CD8-positive, alpha-beta T cell (primary cell): ENCODE measurements at regions of chr16 and their contacts with region 1.

Region 1: DNA sequence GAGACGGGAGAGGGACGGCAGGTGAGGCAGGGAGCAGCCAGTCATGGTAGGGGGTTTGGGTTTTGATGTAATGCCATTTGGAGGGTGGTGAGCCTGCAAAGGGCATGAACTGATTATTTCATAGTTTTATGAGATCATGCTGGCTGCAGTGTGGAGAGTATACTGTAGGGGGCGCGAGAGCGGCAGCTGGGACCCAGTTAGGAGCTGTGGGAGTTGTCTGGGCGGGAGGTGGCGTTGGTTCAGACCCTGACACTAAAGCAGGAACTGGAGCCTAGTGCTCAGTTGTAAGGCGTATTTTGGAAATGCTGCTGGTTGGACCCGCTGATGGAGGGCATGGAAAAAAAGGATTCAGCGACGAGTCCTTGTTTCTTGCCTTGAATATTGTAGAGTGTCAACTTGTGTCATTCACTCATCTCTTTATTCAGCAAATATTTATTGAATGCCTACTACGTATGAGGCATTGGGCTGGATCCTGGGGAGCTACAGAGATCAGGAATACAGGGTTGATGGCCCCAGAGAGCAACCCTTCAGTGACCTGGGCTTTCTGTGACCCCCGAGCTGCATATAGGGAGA is 23.7 kb upstream of the KDM8 start:
- DNase-seq: peak; percentile 78 to 94 (median 88)
- ATAC-seq: peak; percentile 100
- H3K4me3 ChIP-seq: no peak overlapping the region
- H3K4me3 Mint-ChIP-seq: peak overlapping the region; percentile 9
- H3K27ac ChIP-seq: no peak overlapping the region
- H3K27ac Mint-ChIP-seq: peak overlapping the region; percentile 28
- H3K4me1 ChIP-seq: peaks cover 22% of the 10 kb centered on the region
- H3K4me1 Mint-ChIP-seq: peaks cover 24% of the 10 kb centered on the region
- H3K27me3 ChIP-seq: no peaks in the 10 kb centered on the region
- H3K27me3 Mint-ChIP-seq: no peaks in the 10 kb centered on the region
- CTCF ChIP-seq: peak; percentile 92

Region 2: GRCh38 chr16:27025581-27025980 is 154.0 kb before region 1 on chr16:
- CTCF ChIA-PET with region 1: no interaction called
- POLR2A ChIA-PET with region 1: no interaction called
- intact Hi-C with region 1: no loop called
- DNase-seq: no peak
- ATAC-seq: no peak
- H3K4me3 ChIP-seq: no peak overlapping the region
- H3K4me3 Mint-ChIP-seq: no peak overlapping the region
- H3K27ac ChIP-seq: no peak overlapping the region
- H3K27ac Mint-ChIP-seq: no peak overlapping the region
- H3K4me1 ChIP-seq: no peaks in the 10 kb centered on the region
- H3K4me1 Mint-ChIP-seq: no peaks in the 10 kb centered on the region
- H3K27me3 ChIP-seq: no peaks in the 10 kb centered on the region
- H3K27me3 Mint-ChIP-seq: peaks cover 15% of the 10 kb centered on the region
- CTCF ChIP-seq: no peak

Region 3: GRCh38 chr16:27195941-27196595 is 16.5 kb after region 1 on chr16:
- CTCF ChIA-PET with region 1: interaction called, 59 read pairs
- POLR2A ChIA-PET with region 1: interaction called, 8 read pairs
- intact Hi-C with region 1: loop called (anchors 1 kb)
- DNase-seq: peak in 8 of 9 experiments; percentile 29 to 87 (median 65)
- ATAC-seq: peak; percentile 89
- H3K4me3 ChIP-seq: peak overlapping the region in 1 of 2 experiments; percentile 18
- H3K4me3 Mint-ChIP-seq: peak overlapping the region; percentile 58
- H3K27ac ChIP-seq: peak overlapping the region; percentile 20 to 53
- H3K27ac Mint-ChIP-seq: peak overlapping the region; percentile 98
- H3K4me1 ChIP-seq: peaks cover 68% of the 10 kb centered on the region
- H3K4me1 Mint-ChIP-seq: peaks cover 70% of the 10 kb centered on the region
- H3K27me3 ChIP-seq: no peaks in the 10 kb centered on the region
- H3K27me3 Mint-ChIP-seq: no peaks in the 10 kb centered on the region
- CTCF ChIP-seq: no peak

Region 4: GRCh38 chr16:27214428-27214961 is 34.9 kb after region 1 on chr16:
- CTCF ChIA-PET with region 1: interaction called, 11 read pairs
- POLR2A ChIA-PET with region 1: no interaction called
- intact Hi-C with region 1: loop called in 1 of 2 experiments (anchors 5 kb)
- DNase-seq: no peak
- ATAC-seq: no peak
- H3K4me3 ChIP-seq: no peak overlapping the region
- H3K4me3 Mint-ChIP-seq: no peak overlapping the region
- H3K27ac ChIP-seq: no peak overlapping the region
- H3K27ac Mint-ChIP-seq: no peak overlapping the region
- H3K4me1 ChIP-seq: peaks cover 21% of the 10 kb centered on the region
- H3K4me1 Mint-ChIP-seq: peaks cover 13% of the 10 kb centered on the region
- H3K27me3 ChIP-seq: no peaks in the 10 kb centered on the region
- H3K27me3 Mint-ChIP-seq: no peaks in the 10 kb centered on the region
- CTCF ChIP-seq: no peak

Region 5: DNA sequence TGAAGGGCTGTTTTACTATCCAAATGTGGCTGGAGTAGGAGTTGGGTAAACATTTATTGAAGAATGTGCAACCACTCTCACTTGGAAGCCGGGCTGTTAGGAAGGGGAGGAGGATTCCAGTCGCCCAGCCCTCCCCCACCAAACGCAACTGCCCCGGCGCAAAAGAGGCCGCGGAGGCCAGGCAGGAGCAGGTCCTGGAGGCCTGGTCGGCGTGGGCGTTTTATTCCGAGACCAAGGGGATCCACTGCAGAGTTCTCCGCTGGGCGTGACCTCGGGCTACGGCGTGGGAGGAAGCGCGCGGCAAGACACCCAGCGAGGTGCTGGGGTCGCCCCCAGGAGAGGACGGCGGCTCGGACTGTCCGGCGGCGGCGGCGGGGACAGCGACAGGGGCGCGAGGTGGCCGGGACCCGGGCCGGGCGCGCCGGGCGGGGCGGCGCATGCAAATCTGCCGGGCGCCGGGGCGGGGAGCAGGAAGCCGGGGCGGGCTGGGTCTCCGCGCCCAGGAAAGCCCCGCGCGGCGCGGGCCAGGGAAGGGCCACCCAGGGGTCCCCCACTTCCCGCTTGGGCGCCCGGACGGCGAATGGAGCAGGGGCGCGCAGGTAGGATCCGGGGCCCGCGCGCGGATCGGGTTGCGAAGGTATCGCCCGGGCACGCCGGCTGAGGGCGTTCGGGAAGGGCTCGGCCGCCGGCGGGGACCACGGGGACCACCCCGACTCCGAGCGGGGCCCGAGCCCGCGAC is 134.0 kb after region 1 on chr16 and contains the start of gene IL4R:
- CTCF ChIA-PET with region 1: interaction called, 10 read pairs
- POLR2A ChIA-PET with region 1: interaction called, 8 read pairs
- intact Hi-C with region 1: loop called (anchors 5 kb)
- DNase-seq: peak; percentile 19 to 84 (median 64)
- ATAC-seq: peak; percentile 51
- H3K4me3 ChIP-seq: peak within 1 kb of the TSS; percentile 88 to 90
- H3K4me3 Mint-ChIP-seq: peak within 1 kb of the TSS; percentile 94
- H3K27ac ChIP-seq: peak within 1 kb of the TSS; percentile 83 to 87
- H3K27ac Mint-ChIP-seq: peak within 1 kb of the TSS; percentile 98
- H3K4me1 ChIP-seq: peaks cover 43% of the 10 kb centered on the region
- H3K4me1 Mint-ChIP-seq: peaks cover 47% of the 10 kb centered on the region
- H3K27me3 ChIP-seq: no peaks in the 10 kb centered on the region
- H3K27me3 Mint-ChIP-seq: no peaks in the 10 kb centered on the region
- CTCF ChIP-seq: no peak
- total RNA-seq, gene IL4R: 224 to 240 TPM

Region 6: GRCh38 chr16:27374804-27375425 is 195.3 kb after region 1 on chr16:
- CTCF ChIA-PET with region 1: interaction called, 17 read pairs
- POLR2A ChIA-PET with region 1: no interaction called
- intact Hi-C with region 1: no loop called
- DNase-seq: peak in 6 of 9 experiments; percentile 46 to 65 (median 58)
- ATAC-seq: peak; percentile 39
- H3K4me3 ChIP-seq: no peak overlapping the region
- H3K4me3 Mint-ChIP-seq: no peak overlapping the region
- H3K27ac ChIP-seq: no peak overlapping the region
- H3K27ac Mint-ChIP-seq: no peak overlapping the region
- H3K4me1 ChIP-seq: peaks cover 63% of the 10 kb centered on the region
- H3K4me1 Mint-ChIP-seq: peaks cover 42% of the 10 kb centered on the region
- H3K27me3 ChIP-seq: no peaks in the 10 kb centered on the region
- H3K27me3 Mint-ChIP-seq: no peaks in the 10 kb centered on the region
- CTCF ChIP-seq: peak; percentile 42

Region 7: DNA sequence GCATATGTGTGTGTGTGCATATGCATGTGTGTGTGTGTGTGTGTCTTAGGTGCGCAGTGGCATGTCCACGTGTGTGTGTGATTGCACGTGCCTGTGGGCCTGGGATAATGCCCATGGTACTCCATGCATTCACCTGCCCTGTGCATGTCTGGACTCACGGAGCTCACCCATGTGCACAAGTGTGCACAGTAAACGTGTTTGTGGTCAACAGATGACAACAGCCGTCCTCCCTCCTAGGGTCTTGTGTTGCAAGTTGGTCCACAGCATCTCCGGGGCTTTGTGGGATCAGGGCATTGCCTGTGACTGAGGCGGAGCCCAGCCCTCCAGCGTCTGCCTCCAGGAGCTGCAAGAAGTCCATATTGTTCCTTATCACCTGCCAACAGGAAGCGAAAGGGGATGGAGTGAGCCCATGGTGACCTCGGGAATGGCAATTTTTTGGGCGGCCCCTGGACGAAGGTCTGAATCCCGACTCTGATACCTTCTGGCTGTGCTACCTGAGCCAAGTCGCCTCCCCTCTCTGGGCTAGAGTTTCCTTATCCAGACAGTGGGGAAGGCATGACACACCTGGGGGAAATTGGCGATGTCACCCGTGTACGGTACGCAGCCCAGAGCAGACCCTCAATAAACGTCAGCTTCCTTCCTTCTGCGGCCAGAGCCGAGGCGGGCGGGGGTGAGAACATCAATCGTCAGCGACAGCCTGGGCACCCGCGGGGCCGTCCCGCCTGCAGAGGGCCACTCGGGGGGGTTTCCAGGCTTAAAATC is 270.0 kb after region 1 on chr16:
- CTCF ChIA-PET with region 1: interaction called, 16 read pairs
- POLR2A ChIA-PET with region 1: interaction called, 9 read pairs
- intact Hi-C with region 1: no loop called
- DNase-seq: peak; percentile 63 to 97 (median 80)
- ATAC-seq: peak; percentile 60
- H3K4me3 ChIP-seq: peak overlapping the region; percentile 17 to 26
- H3K4me3 Mint-ChIP-seq: peak overlapping the region; percentile 70
- H3K27ac ChIP-seq: peak overlapping the region; percentile 60 to 91
- H3K27ac Mint-ChIP-seq: peak overlapping the region; percentile 99
- H3K4me1 ChIP-seq: peaks cover 68% of the 10 kb centered on the region
- H3K4me1 Mint-ChIP-seq: peaks cover 87% of the 10 kb centered on the region
- H3K27me3 ChIP-seq: no peaks in the 10 kb centered on the region
- H3K27me3 Mint-ChIP-seq: no peaks in the 10 kb centered on the region
- CTCF ChIP-seq: no peak

Region 8: GRCh38 chr16:28597692-28598261 is 1418.2 kb after region 1 on chr16:
- CTCF ChIA-PET with region 1: no interaction called
- POLR2A ChIA-PET with region 1: no interaction called
- intact Hi-C with region 1: no loop called
- DNase-seq: no peak
- ATAC-seq: no peak
- H3K4me3 ChIP-seq: no peak overlapping the region
- H3K4me3 Mint-ChIP-seq: no peak overlapping the region
- H3K27ac ChIP-seq: no peak overlapping the region
- H3K27ac Mint-ChIP-seq: no peak overlapping the region
- H3K4me1 ChIP-seq: no peaks in the 10 kb centered on the region
- H3K4me1 Mint-ChIP-seq: peaks cover 2% of the 10 kb centered on the region
- H3K27me3 ChIP-seq: no peaks in the 10 kb centered on the region
- H3K27me3 Mint-ChIP-seq: no peaks in the 10 kb centered on the region
- CTCF ChIP-seq: no peak